BJ (cell line): ENCODE measurements at regions of chr15 and their contacts with region 1.

Region 1: GRCh38 chr15:65638681-65639089 is 16.9 kb downstream of the SLC24A1 start:
- DNase-seq: peak; percentile 31
- H3K4me3 ChIP-seq: no peak overlapping the region
- H3K27me3 ChIP-seq: no peaks in the 10 kb centered on the region
- CTCF ChIP-seq: peak; percentile 79

Region 2: GRCh38 chr15:65620833-65621232 is 17.9 kb before region 1 on chr15:
- CTCF ChIA-PET with region 1: interaction called, 33 read pairs
- POLR2A ChIA-PET with region 1: no interaction called
- DNase-seq: no peak
- H3K4me3 ChIP-seq: no peak overlapping the region
- H3K27me3 ChIP-seq: no peaks in the 10 kb centered on the region
- CTCF ChIP-seq: no peak

Region 3: DNA sequence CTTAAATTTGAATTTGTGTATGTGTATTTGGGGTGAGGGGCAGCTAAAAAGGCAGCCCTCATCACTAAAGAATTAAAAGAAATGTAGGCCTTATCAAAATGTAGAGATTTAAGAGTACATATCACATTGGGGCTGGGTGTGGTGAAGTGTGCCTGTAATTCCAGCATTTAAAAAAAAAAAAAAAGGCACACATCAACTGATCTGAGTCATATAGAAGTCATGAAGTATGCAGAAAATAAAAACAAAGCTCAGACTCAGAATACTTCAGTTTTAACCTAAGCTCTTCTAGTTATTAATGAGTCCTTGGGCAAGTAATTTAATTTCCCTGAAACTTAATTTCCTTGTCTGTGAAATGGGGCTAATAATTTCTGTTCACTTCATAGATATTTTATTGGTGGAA is 14.7 kb after region 1 on chr15:
- CTCF ChIA-PET with region 1: interaction called, 45 read pairs
- POLR2A ChIA-PET with region 1: interaction called, 3 read pairs
- DNase-seq: no peak
- H3K4me3 ChIP-seq: no peak overlapping the region
- H3K27me3 ChIP-seq: no peaks in the 10 kb centered on the region
- CTCF ChIP-seq: no peak

Region 4: GRCh38 chr15:65675551-65675950 is 36.9 kb after region 1 on chr15:
- CTCF ChIA-PET with region 1: no interaction called
- POLR2A ChIA-PET with region 1: no interaction called
- DNase-seq: no peak
- H3K4me3 ChIP-seq: no peak overlapping the region
- H3K27me3 ChIP-seq: no peaks in the 10 kb centered on the region
- CTCF ChIP-seq: no peak